Activated CD4-positive, alpha-beta memory T cell treated with anti-CD3 and anti-CD28 coated beads, Interleukin-2, amount 10 ng/mL, durations not matched to agents 7 days and 5 days (primary cell): ENCODE measurements at regions of chr16 and their contacts with region 1.

Region 1: GRCh38 chr16:1308977-1309885 is at the start of gene UBE2I:
- DNase-seq: peak; percentile 98
- H3K4me3 Mint-ChIP-seq: peak within 1 kb of the TSS; percentile 100
- H3K27ac Mint-ChIP-seq: peak within 1 kb of the TSS; percentile 96
- H3K4me1 Mint-ChIP-seq: peaks cover 45% of the 10 kb centered on the region
- H3K27me3 Mint-ChIP-seq: no peaks in the 10 kb centered on the region
- total RNA-seq, gene UBE2I: 198 to 199 TPM

Region 2: GRCh38 chr16:1331712-1332617 is 22.7 kb after region 1 on chr16:
- CTCF ChIA-PET with region 1: no interaction called
- POLR2A ChIA-PET with region 1: interaction called, 13 read pairs
- DNase-seq: peak; percentile 75
- H3K4me3 Mint-ChIP-seq: peak overlapping the region; percentile 35
- H3K27ac Mint-ChIP-seq: no peak overlapping the region
- H3K4me1 Mint-ChIP-seq: peaks cover 17% of the 10 kb centered on the region
- H3K27me3 Mint-ChIP-seq: peaks cover 35% of the 10 kb centered on the region

Region 3: GRCh38 chr16:1342526-1343427 is 33.5 kb after region 1 on chr16:
- CTCF ChIA-PET with region 1: no interaction called
- POLR2A ChIA-PET with region 1: interaction called, 12 read pairs
- DNase-seq: peak; percentile 96
- H3K4me3 Mint-ChIP-seq: peak overlapping the region; percentile 56
- H3K27ac Mint-ChIP-seq: no peak overlapping the region
- H3K4me1 Mint-ChIP-seq: peaks cover 13% of the 10 kb centered on the region
- H3K27me3 Mint-ChIP-seq: no peaks in the 10 kb centered on the region